H1 (cell line): ENCODE measurements at regions of chr2 and their contacts with region 1.

Region 1: DNA sequence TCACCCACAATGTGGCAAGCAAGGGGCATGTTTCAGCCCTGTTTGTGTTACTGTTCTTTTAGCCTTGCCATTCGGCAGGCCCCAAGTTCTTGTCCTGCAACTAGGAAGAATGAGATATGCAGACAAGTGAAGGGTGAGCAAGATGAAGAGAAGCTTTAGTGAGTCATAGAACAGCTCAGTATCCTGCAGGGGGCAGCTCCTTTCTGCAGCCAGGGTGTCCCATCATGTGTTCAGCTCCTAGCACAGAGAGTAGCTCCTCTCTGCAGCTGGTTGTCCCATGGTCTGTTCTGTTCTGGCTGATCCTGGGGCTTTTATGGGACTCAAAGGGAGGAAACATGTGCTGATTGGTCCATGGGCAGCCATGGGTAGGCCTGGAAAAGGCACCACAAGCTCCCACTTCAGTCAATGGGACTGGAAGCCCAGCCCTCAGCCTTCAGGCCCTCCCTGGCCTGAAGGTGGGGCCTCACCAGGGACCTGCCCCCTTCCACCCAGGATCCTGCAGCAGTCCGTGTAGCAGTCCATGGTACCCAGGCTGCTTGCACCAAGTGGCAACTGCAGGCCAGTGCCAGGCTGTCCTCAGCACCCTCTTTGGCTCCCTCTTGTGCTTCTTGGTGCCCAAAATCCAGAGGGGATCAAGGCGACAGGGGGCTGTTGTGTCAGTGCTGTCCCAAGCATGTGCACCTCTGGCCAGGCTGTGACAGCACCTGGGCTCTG is 326.4 kb downstream of the NR4A2 start:
- DNase-seq: no peak
- H3K4me3 ChIP-seq: no peak overlapping the region
- H3K27ac ChIP-seq: no peak overlapping the region
- H3K4me1 ChIP-seq: no peaks in the 10 kb centered on the region; a peak in 1 of 7 replicates
- H3K27me3 ChIP-seq: no peaks in the 10 kb centered on the region
- CTCF ChIP-seq: peak in 1 of 3 experiments; percentile 1; a peak in 1 of 4 replicates
- EP300 ChIP-seq: no peak
- POLR2A ChIP-seq: no peak
- RAD21 ChIP-seq: peak in 1 of 2 experiments; percentile 37; a peak in 2 of 4 replicates

Region 2: GRCh38 chr2:156021146-156022035 is 15.2 kb after region 1 on chr2:
- CTCF ChIA-PET with region 1: interaction called, 13 read pairs
- POLR2A ChIA-PET with region 1: no interaction called
- DNase-seq: no peak
- H3K4me3 ChIP-seq: no peak overlapping the region
- H3K27ac ChIP-seq: no peak overlapping the region
- H3K4me1 ChIP-seq: peaks cover 0 to 4% (median 0%) of the 10 kb centered on the region in 4 experiments; a peak in 2 of 7 replicates
- H3K27me3 ChIP-seq: no peaks in the 10 kb centered on the region
- CTCF ChIP-seq: no peak
- EP300 ChIP-seq: no peak
- POLR2A ChIP-seq: no peak
- RAD21 ChIP-seq: no peak